ENCODE measurements at regions of chr2 and their contacts with region 1.

Region 1: GRCh38 chr2:32356735-32357644 is at the start of gene BIRC6:
- DNase-seq: peak; percentile 85
- ATAC-seq: peak; percentile 90
- H3K4me3 ChIP-seq: peak within 1 kb of the TSS; percentile 98
- H3K27ac ChIP-seq: peak within 1 kb of the TSS; percentile 91
- H3K4me1 ChIP-seq: peaks cover 4% of the 10 kb centered on the region
- H3K27me3 ChIP-seq: no peaks in the 10 kb centered on the region
- CTCF ChIP-seq: no peak
- EP300 ChIP-seq: no peak; a peak in 1 of 4 replicates
- POLR2A ChIP-seq: peak; percentile 97
- RAD21 ChIP-seq: no peak
- polyA plus RNA-seq, gene BIRC6: 18.8 to 30.9 TPM

Region 2: GRCh38 chr2:32277674-32278482 is 79.1 kb before region 1 on chr2 and contains the start of gene YIPF4:
- CTCF ChIA-PET with region 1: no interaction called
- POLR2A ChIA-PET with region 1: interaction called, 6 read pairs
- RAD21 ChIA-PET with region 1: no interaction called
- SMC1A ChIA-PET with region 1: no interaction called
- in situ Hi-C with region 1: no loop called
- intact Hi-C with region 1: loop called (anchors 5 kb)
- DNase-seq: peak; percentile 90
- ATAC-seq: peak; percentile 98
- H3K4me3 ChIP-seq: peak within 1 kb of the TSS; percentile 87
- H3K27ac ChIP-seq: peak within 1 kb of the TSS; percentile 77
- H3K4me1 ChIP-seq: no peaks in the 10 kb centered on the region
- H3K27me3 ChIP-seq: no peaks in the 10 kb centered on the region
- CTCF ChIP-seq: no peak
- EP300 ChIP-seq: no peak
- POLR2A ChIP-seq: peak; percentile 88
- RAD21 ChIP-seq: no peak
- polyA plus RNA-seq, gene YIPF4: 2.8 to 11.4 TPM

Measured in GM12878 (cell line).